Naive thymus-derived CD4-positive, alpha-beta T cell (primary cell): ENCODE measurements at regions of chr16 and their contacts with region 1.

Region 1: GRCh38 chr16:1413684-1414531 is 596 bp downstream of the UNKL start:
- DNase-seq: peak; percentile 44 to 77 (median 57)
- ATAC-seq: peak; percentile 66
- H3K4me3 ChIP-seq: peak overlapping the region; percentile 79
- H3K4me3 Mint-ChIP-seq: peak overlapping the region; percentile 75 to 91 (median 85)
- H3K27ac ChIP-seq: peak overlapping the region; percentile 89
- H3K27ac Mint-ChIP-seq: peak overlapping the region; percentile 70 to 92 (median 88)
- H3K4me1 ChIP-seq: peaks cover 0 to 8% of the 10 kb centered on the region in 2 donors
- H3K4me1 Mint-ChIP-seq: peaks cover 0 to 33% (median 26%) of the 10 kb centered on the region in 7 donors
- H3K27me3 ChIP-seq: no peaks in the 10 kb centered on the region
- H3K27me3 Mint-ChIP-seq: no peaks in the 10 kb centered on the region

Region 2: GRCh38 chr16:1105888-1106620 is 307.9 kb before region 1 on chr16:
- CTCF ChIA-PET with region 1: no interaction called
- POLR2A ChIA-PET with region 1: no interaction called
- intact Hi-C with region 1: no loop called
- DNase-seq: peak in 6 of 9 donors; percentile 31 to 44 (median 40)
- ATAC-seq: peak; percentile 55
- H3K4me3 ChIP-seq: no peak overlapping the region
- H3K4me3 Mint-ChIP-seq: no peak overlapping the region
- H3K27ac ChIP-seq: no peak overlapping the region
- H3K27ac Mint-ChIP-seq: no peak overlapping the region
- H3K4me1 ChIP-seq: no peaks in the 10 kb centered on the region
- H3K4me1 Mint-ChIP-seq: no peaks in the 10 kb centered on the region
- H3K27me3 ChIP-seq: no peaks in the 10 kb centered on the region
- H3K27me3 Mint-ChIP-seq: peaks cover 0 to 11% (median 0%) of the 10 kb centered on the region in 5 donors

Region 3: GRCh38 chr16:1300664-1301476 is 113.0 kb before region 1 on chr16:
- CTCF ChIA-PET with region 1: no interaction called
- POLR2A ChIA-PET with region 1: no interaction called
- intact Hi-C with region 1: loop called (anchors 2 to 5 kb)
- DNase-seq: peak; percentile 43 to 83 (median 67)
- ATAC-seq: peak; percentile 82
- H3K4me3 ChIP-seq: no peak overlapping the region
- H3K4me3 Mint-ChIP-seq: peak overlapping the region in 1 of 10 donors; percentile 55
- H3K27ac ChIP-seq: no peak overlapping the region
- H3K27ac Mint-ChIP-seq: no peak overlapping the region
- H3K4me1 ChIP-seq: peaks cover under 1 to 14% of the 10 kb centered on the region in 2 donors
- H3K4me1 Mint-ChIP-seq: peaks cover 7 to 19% (median 9%) of the 10 kb centered on the region in 7 donors
- H3K27me3 ChIP-seq: no peaks in the 10 kb centered on the region
- H3K27me3 Mint-ChIP-seq: peaks cover 4 to 16% (median 5%) of the 10 kb centered on the region in 5 donors